CD4-positive, alpha-beta memory T cell (primary cell): ENCODE measurements at regions of chr20 and their contacts with region 1.

Region 1: GRCh38 chr20:38748097-38748860 is at the start of gene ACTR5:
- DNase-seq: peak; percentile 96 to 100 (median 97)
- H3K4me3 ChIP-seq: peak within 1 kb of the TSS; percentile 71 to 92
- H3K4me3 Mint-ChIP-seq: peak within 1 kb of the TSS; percentile 97 to 99 (median 98)
- H3K27ac ChIP-seq: peak within 1 kb of the TSS; percentile 88
- H3K27ac Mint-ChIP-seq: peak within 1 kb of the TSS; percentile 98 to 100 (median 100)
- H3K4me1 ChIP-seq: peaks cover 21% of the 10 kb centered on the region
- H3K4me1 Mint-ChIP-seq: peaks cover 14 to 23% (median 19%) of the 10 kb centered on the region in 4 donors
- H3K27me3 ChIP-seq: no peaks in the 10 kb centered on the region
- H3K27me3 Mint-ChIP-seq: peaks cover 6% of the 10 kb centered on the region in 2 donors
- total RNA-seq, gene ACTR5: 16.9 to 17.4 TPM

Region 2: DNA sequence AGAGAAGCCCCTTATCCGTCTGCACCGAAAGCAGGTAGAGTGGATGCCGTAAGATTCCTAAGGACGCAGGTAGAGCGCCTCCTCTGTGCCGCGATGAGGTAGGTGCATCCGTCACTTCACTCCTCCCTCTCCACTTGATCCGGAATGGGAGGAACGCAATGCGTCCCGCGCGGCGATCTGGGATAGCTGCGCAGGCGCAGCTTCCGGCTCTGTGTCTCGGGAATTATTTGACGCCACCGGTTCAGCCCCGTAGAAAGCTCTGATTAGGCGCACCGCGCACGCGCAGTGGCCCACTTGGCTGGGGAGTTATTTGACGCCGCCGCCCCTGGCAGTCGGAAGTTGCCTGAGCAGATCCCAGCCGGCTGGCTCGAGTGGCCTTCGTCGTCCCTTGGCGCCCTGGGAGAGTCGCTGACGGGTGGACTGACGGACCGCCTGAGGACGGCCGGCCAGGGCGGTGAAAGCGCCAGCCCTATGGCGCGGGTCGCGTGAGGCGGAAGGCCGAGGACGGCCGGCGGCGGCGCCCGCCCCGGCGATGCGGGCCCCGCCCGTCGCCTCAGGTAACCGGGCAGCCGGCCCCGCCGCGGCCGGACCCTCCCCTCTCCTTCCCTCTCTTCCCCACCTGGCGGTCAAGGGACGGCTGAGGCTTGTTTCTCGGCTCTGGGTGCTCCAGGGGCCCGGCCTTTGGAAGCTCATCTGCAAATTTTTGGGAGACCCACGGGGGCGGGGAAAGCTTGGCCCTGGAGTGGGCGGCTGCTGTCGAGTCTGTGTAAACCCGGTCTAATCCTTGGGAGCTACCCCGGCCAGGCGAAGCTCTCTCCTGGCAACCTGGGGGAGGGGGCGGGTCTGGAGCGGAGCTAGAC is 275.5 kb before region 1 on chr20 and contains the start of gene RALGAPB:
- CTCF ChIA-PET with region 1: no interaction called
- POLR2A ChIA-PET with region 1: no interaction called
- intact Hi-C with region 1: loop called (anchors 1 kb)
- DNase-seq: peak; percentile 98 to 99 (median 98)
- H3K4me3 ChIP-seq: peak within 1 kb of the TSS; percentile 71 to 75
- H3K4me3 Mint-ChIP-seq: peak within 1 kb of the TSS; percentile 87 to 92 (median 90)
- H3K27ac ChIP-seq: peak within 1 kb of the TSS; percentile 88
- H3K27ac Mint-ChIP-seq: peak within 1 kb of the TSS; percentile 86 to 98 (median 94)
- H3K4me1 ChIP-seq: peaks cover 51% of the 10 kb centered on the region
- H3K4me1 Mint-ChIP-seq: peaks cover 37 to 59% (median 48%) of the 10 kb centered on the region in 4 donors
- H3K27me3 ChIP-seq: no peaks in the 10 kb centered on the region
- H3K27me3 Mint-ChIP-seq: no peaks in the 10 kb centered on the region
- total RNA-seq, gene RALGAPB: 54.8 to 57.4 TPM

Region 3: GRCh38 chr20:38645980-38646858 is 102.1 kb before region 1 on chr20:
- CTCF ChIA-PET with region 1: interaction called, 103 read pairs
- POLR2A ChIA-PET with region 1: no interaction called
- intact Hi-C with region 1: loop called (anchors 1 kb)
- DNase-seq: peak; percentile 84 to 91 (median 88)
- H3K4me3 ChIP-seq: peak overlapping the region in 1 of 2 donors; percentile 39
- H3K4me3 Mint-ChIP-seq: peak overlapping the region; percentile 67 to 87 (median 82)
- H3K27ac ChIP-seq: no peak overlapping the region
- H3K27ac Mint-ChIP-seq: peak overlapping the region in 6 of 7 donors; percentile 52 to 88 (median 75)
- H3K4me1 ChIP-seq: peaks cover 11% of the 10 kb centered on the region
- H3K4me1 Mint-ChIP-seq: peaks cover 5 to 8% (median 7%) of the 10 kb centered on the region in 4 donors
- H3K27me3 ChIP-seq: peaks cover 9% of the 10 kb centered on the region
- H3K27me3 Mint-ChIP-seq: peaks cover 24 to 36% of the 10 kb centered on the region in 2 donors

Region 4: DNA sequence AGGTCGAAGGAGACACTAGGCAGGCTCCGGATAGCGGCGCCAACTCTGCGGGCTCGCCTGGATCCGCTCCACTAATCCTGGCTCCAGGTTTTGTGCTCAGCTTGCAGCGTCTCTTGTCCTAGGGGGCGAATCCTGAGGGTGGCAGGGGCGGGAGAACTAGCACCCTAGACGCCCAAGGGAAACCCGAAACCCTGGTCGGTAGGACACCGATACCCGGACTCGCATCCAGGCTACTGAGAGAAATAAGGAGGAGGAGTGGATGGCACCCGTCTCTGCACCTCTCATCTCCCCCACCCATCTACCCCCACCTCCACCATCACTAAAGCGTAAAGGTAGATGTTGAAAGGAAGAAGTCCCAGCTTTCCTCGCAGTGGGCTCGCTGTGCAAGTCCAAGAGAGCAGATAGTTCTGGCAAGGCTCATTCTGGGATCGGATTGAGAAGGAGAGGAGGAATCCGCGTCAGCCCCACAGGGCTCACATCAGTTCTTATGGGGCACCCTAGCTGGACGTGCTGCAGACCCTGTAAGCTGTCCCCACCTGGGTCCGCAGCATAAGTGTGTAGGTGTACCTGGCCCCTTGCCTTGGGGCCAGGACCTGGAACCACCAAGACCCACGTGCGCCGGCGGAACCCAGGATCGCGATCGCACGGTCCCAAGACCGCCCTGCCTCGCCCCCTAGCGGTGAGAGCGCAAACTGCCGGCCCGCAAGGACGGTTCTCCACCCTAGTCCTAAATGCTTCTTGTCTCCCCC is 17.1 kb before region 1 on chr20:
- CTCF ChIA-PET with region 1: interaction called, 23 read pairs
- POLR2A ChIA-PET with region 1: interaction called, 4 read pairs
- intact Hi-C with region 1: loop called (anchors 2 kb)
- DNase-seq: peak; percentile 66 to 74 (median 71)
- H3K4me3 ChIP-seq: peak overlapping the region; percentile 44 to 75
- H3K4me3 Mint-ChIP-seq: peak overlapping the region; percentile 61 to 85 (median 73)
- H3K27ac ChIP-seq: no peak overlapping the region
- H3K27ac Mint-ChIP-seq: peak overlapping the region in 5 of 7 donors; percentile 11 to 94 (median 68)
- H3K4me1 ChIP-seq: peaks cover 46% of the 10 kb centered on the region
- H3K4me1 Mint-ChIP-seq: peaks cover 33 to 52% (median 44%) of the 10 kb centered on the region in 4 donors
- H3K27me3 ChIP-seq: peaks cover 74% of the 10 kb centered on the region
- H3K27me3 Mint-ChIP-seq: peaks cover 67 to 85% of the 10 kb centered on the region in 2 donors

Region 5: GRCh38 chr20:38764567-38765355 is 16.5 kb after region 1 on chr20:
- CTCF ChIA-PET with region 1: interaction called, 14 read pairs
- POLR2A ChIA-PET with region 1: interaction called, 4 read pairs
- intact Hi-C with region 1: no loop called
- DNase-seq: no peak
- H3K4me3 ChIP-seq: no peak overlapping the region
- H3K4me3 Mint-ChIP-seq: no peak overlapping the region
- H3K27ac ChIP-seq: no peak overlapping the region
- H3K27ac Mint-ChIP-seq: peak overlapping the region in 4 of 7 donors; percentile 48 to 77 (median 64)
- H3K4me1 ChIP-seq: no peaks in the 10 kb centered on the region
- H3K4me1 Mint-ChIP-seq: peaks cover 0 to 4% (median 2%) of the 10 kb centered on the region in 4 donors
- H3K27me3 ChIP-seq: no peaks in the 10 kb centered on the region
- H3K27me3 Mint-ChIP-seq: no peaks in the 10 kb centered on the region

Region 6: GRCh38 chr20:38875175-38875993 is 127.1 kb after region 1 on chr20:
- CTCF ChIA-PET with region 1: interaction called, 9 read pairs
- POLR2A ChIA-PET with region 1: interaction called, 9 read pairs
- intact Hi-C with region 1: loop called (anchors 1 kb)
- DNase-seq: peak; percentile 78 to 85 (median 79)
- H3K4me3 ChIP-seq: peak overlapping the region; percentile 33 to 48
- H3K4me3 Mint-ChIP-seq: peak overlapping the region; percentile 86 to 95 (median 88)
- H3K27ac ChIP-seq: peak overlapping the region; percentile 75
- H3K27ac Mint-ChIP-seq: peak overlapping the region; percentile 97 to 100 (median 99)
- H3K4me1 ChIP-seq: peaks cover 87% of the 10 kb centered on the region
- H3K4me1 Mint-ChIP-seq: peaks cover 69 to 99% (median 84%) of the 10 kb centered on the region in 4 donors
- H3K27me3 ChIP-seq: no peaks in the 10 kb centered on the region
- H3K27me3 Mint-ChIP-seq: no peaks in the 10 kb centered on the region

Region 7: DNA sequence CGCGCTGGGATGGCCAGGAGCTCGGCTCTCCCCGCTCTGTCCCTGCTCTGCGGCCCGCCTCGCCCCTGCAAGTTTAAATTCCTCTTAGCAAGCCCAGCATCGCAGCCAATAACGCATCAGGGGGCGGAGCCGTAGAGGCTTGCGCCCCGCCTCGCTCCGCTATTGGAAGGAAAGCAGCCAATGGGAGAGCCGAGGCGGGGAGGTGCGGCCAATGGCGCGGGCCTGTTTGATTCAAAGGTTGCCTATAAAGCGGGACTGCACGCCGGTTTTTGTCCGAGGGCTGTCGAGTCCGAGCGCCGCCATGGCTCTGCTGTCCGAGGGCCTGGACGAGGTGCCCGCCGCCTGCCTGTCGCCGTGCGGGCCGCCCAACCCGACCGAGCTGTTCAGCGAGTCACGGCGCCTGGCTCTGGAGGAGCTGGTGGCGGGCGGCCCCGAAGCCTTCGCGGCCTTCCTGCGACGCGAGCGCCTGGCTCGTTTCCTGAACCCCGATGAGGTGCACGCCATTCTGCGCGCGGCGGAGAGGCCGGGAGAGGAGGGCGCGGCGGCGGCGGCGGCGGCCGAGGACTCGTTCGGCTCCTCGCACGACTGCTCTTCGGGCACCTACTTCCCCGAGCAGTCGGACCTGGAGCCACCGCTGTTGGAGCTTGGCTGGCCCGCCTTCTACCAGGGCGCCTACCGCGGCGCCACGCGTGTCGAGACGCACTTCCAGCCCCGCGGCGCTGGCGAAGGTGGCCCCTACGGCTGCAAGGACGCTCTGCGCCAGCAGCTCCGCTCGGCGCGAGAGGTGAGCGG is 178.1 kb after region 1 on chr20 and contains the start of gene FAM83D:
- CTCF ChIA-PET with region 1: interaction called, 4 read pairs
- POLR2A ChIA-PET with region 1: no interaction called
- intact Hi-C with region 1: loop called (anchors 1 kb)
- DNase-seq: peak; percentile 93 to 96 (median 95)
- H3K4me3 ChIP-seq: peak within 1 kb of the TSS; percentile 57 to 70
- H3K4me3 Mint-ChIP-seq: peak within 1 kb of the TSS; percentile 81 to 87 (median 82)
- H3K27ac ChIP-seq: peak within 1 kb of the TSS; percentile 51
- H3K27ac Mint-ChIP-seq: peak within 1 kb of the TSS; percentile 32 to 93 (median 66)
- H3K4me1 ChIP-seq: peaks cover 33% of the 10 kb centered on the region
- H3K4me1 Mint-ChIP-seq: peaks cover 21 to 37% (median 27%) of the 10 kb centered on the region in 4 donors
- H3K27me3 ChIP-seq: no peaks in the 10 kb centered on the region
- H3K27me3 Mint-ChIP-seq: no peaks in the 10 kb centered on the region
- total RNA-seq, gene FAM83D: 1.4 to 1.5 TPM